ENCODE measurements at regions of chr6 and their contacts with region 1.

Region 1: GRCh38 chr6:72704979-72705378 is 83.1 kb downstream of the KCNQ5 start:
- DNase-seq: no peak
- ATAC-seq: no peak
- H3K4me3 ChIP-seq: no peak overlapping the region
- H3K27ac ChIP-seq: no peak overlapping the region
- H3K4me1 ChIP-seq: no peaks in the 10 kb centered on the region
- H3K27me3 ChIP-seq: no peaks in the 10 kb centered on the region
- CTCF ChIP-seq: no peak
- POLR2A ChIP-seq: no peak
- RAD21 ChIP-seq: no peak

Region 2: GRCh38 chr6:72669324-72669723 is 35.7 kb before region 1 on chr6:
- CTCF ChIA-PET with region 1: no interaction called
- POLR2A ChIA-PET with region 1: interaction called, 11 read pairs
- dilution Hi-C with region 1: no loop called
- in situ Hi-C with region 1: no loop called
- intact Hi-C with region 1: no loop called
- DNase-seq: no peak
- ATAC-seq: no peak
- H3K4me3 ChIP-seq: no peak overlapping the region
- H3K27ac ChIP-seq: no peak overlapping the region
- H3K4me1 ChIP-seq: no peaks in the 10 kb centered on the region
- H3K27me3 ChIP-seq: no peaks in the 10 kb centered on the region
- CTCF ChIP-seq: no peak
- POLR2A ChIP-seq: no peak
- RAD21 ChIP-seq: no peak

Measured in IMR-90 (cell line).